Caco-2 (cell line): ENCODE measurements at regions of chr11 and their contacts with region 1.

Region 1: GRCh38 chr11:10878408-10879214 is 20.8 kb upstream of the ZBED5 start:
- DNase-seq: peak in 1 of 2 experiments; percentile 75
- H3K4me3 ChIP-seq: no peak overlapping the region
- H3K4me3 Mint-ChIP-seq: no peak overlapping the region
- H3K27ac Mint-ChIP-seq: no peak overlapping the region
- H3K4me1 ChIP-seq: no peaks in the 10 kb centered on the region
- H3K4me1 Mint-ChIP-seq: peaks cover 7% of the 10 kb centered on the region
- H3K27me3 ChIP-seq: no peaks in the 10 kb centered on the region
- H3K27me3 Mint-ChIP-seq: no peaks in the 10 kb centered on the region
- CTCF ChIP-seq: peak; percentile 77 to 86

Region 2: GRCh38 chr11:10906513-10906912 is 27.9 kb after region 1 on chr11:
- CTCF ChIA-PET with region 1: no interaction called
- POLR2A ChIA-PET with region 1: no interaction called
- intact Hi-C with region 1: loop called (anchors 2 kb)
- DNase-seq: peak; percentile 47 to 59
- H3K4me3 ChIP-seq: no peak overlapping the region
- H3K4me3 Mint-ChIP-seq: no peak overlapping the region
- H3K27ac Mint-ChIP-seq: no peak overlapping the region
- H3K4me1 ChIP-seq: peaks cover 20% of the 10 kb centered on the region
- H3K4me1 Mint-ChIP-seq: peaks cover 26% of the 10 kb centered on the region
- H3K27me3 ChIP-seq: no peaks in the 10 kb centered on the region
- H3K27me3 Mint-ChIP-seq: no peaks in the 10 kb centered on the region
- CTCF ChIP-seq: peak; percentile 13 to 27